ENCODE measurements at regions of chr6 and their contacts with region 1.

Region 1: DNA sequence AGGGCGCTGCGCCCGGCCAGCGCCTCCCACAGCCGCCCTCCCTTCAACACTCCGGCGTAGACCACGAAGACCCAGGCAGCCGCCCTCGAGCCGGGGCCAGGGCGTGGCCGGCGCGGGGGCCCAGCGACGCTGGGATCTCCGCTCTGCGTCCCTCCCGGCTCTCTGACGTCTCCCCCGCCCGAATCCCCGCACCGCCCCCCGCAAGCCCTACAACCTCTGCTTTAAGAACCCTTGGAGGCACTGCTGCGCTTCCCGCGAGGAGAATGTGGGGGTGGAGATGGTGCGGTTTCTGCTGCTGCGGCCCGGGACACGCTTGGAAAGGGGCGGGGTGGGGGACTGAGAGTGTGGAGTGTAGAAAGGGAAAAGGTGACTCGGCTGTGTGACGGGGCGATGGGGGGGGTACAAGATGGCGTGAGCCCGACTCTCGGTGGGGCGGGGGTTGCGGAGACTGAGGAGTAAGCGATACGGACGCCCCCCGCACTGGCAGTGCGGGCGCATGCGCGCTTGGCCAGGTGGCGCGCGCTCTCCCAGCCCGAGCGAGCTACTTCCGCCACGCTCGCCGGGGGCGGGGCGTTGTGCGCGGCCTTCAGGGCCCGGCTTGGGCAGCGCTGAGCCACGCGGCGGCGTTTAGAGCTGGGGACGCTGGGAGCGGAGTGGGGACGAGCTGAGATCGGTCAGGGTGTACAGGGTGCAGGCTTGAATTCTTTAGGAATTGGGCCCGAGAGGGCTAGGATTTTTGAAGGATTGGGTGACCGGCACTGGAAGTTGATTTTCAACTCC is at the start of gene SUPT3H:
- DNase-seq: peak; percentile 75
- H3K4me3 ChIP-seq: peak within 1 kb of the TSS; percentile 78
- H3K27ac ChIP-seq: peak within 1 kb of the TSS; percentile 95
- H3K27me3 ChIP-seq: no peaks in the 10 kb centered on the region
- CTCF ChIP-seq: peak; percentile 29; the same call in 1 of the 2 replicates
- polyA plus RNA-seq, gene SUPT3H: 6.0 and 8.7 TPM in 2 replicates

Region 2: DNA sequence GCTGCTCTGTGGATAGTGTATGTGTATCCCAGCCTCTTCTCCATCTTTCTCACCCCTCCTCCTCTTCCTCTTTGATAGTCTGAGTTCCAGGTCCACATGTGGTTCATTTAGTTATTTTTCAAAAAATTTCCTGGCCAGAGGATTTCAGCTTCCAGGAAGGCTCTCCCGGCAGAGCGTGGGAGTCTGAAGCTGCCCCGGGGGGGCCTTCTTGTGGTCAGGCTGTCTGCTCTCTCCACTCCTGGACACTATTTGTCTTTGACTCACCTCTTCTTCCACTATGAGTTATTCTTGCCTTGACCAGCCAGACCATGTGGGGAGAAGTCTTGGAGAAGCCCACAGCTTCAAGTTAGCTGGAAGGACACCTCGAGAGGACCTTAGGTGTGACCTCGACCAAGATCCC is 731.4 kb before region 1 on chr6:
- CTCF ChIA-PET with region 1: interaction called, 14 read pairs
- POLR2A ChIA-PET with region 1: no interaction called
- DNase-seq: no peak
- H3K4me3 ChIP-seq: no peak overlapping the region
- H3K27ac ChIP-seq: no peak overlapping the region
- H3K27me3 ChIP-seq: peaks cover 5% of the 10 kb centered on the region
- CTCF ChIP-seq: no peak

Region 3: GRCh38 chr6:45398075-45398839 is 20.5 kb after region 1 on chr6:
- CTCF ChIA-PET with region 1: no interaction called
- POLR2A ChIA-PET with region 1: no interaction called
- DNase-seq: no peak
- H3K4me3 ChIP-seq: no peak overlapping the region
- H3K27ac ChIP-seq: no peak overlapping the region
- H3K27me3 ChIP-seq: no peaks in the 10 kb centered on the region
- CTCF ChIP-seq: no peak

Region 4: DNA sequence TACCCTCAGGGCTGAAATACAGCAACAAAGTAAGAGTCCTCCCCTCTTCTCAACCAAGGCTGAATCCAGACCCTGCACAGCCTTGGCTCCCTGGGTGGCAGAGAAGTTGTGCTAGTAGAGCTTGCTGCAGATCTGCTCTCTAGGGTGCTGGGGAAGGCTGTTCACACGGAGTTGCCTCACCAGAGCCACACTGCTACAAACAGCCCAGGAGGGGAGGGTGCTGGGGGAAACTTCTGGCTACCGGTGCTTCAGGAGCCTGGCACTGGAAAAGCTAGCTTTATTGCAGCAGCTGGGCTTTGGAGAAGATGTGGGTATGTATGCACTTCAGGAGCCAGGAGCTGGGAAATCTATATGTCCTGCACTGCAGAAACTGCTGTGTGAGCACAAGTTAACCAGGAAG is 37.6 kb after region 1 on chr6:
- CTCF ChIA-PET with region 1: no interaction called
- POLR2A ChIA-PET with region 1: no interaction called
- DNase-seq: no peak
- H3K4me3 ChIP-seq: no peak overlapping the region
- H3K27ac ChIP-seq: no peak overlapping the region
- H3K27me3 ChIP-seq: no peaks in the 10 kb centered on the region
- CTCF ChIP-seq: no peak

Region 5: GRCh38 chr6:45548657-45549515 is 171.1 kb after region 1 on chr6:
- CTCF ChIA-PET with region 1: no interaction called
- POLR2A ChIA-PET with region 1: no interaction called
- DNase-seq: no peak
- H3K4me3 ChIP-seq: no peak overlapping the region
- H3K27ac ChIP-seq: peak overlapping the region; percentile 35
- H3K27me3 ChIP-seq: no peaks in the 10 kb centered on the region
- CTCF ChIP-seq: no peak